ENCODE measurements at regions of chr12 and their contacts with region 1.

Region 1: DNA sequence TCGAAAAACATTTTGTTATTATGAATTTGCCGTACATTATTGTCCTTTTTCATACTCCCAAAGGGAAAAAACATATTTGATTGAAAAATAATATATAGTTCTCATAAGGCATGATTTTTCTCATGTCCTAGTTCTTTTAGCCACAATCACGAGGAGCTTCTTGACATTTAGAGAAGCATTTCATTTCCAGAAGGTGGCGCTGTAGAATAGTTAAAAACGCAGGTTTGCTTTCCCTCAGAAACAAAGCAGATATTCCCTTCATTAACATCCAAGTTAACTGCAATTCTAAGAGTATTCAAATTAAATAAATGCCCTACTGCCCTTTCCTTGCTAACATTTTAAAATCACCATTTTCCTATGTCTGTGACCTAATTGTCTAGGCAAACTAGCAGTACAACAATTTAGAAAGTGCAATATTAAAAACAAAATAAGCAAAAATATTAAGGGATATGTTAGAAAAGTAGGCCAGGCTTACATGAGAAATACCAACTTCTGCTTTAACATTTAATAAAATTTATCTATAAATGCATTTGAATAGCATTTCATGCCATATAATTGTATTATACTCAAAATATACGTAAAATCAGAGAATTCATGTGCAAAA is 10.9 kb upstream of the PIK3C2G start:
- DNase-seq: no peak
- ATAC-seq: 0 out of 2 replicates have a peak, but pooled peaks have one; percentile 44
- H3K4me3 Mint-ChIP-seq: no peak overlapping the region
- H3K27ac Mint-ChIP-seq: no peak overlapping the region
- H3K4me1 Mint-ChIP-seq: peaks cover 6% of the 10 kb centered on the region; the same call in 1 of the 2 replicates
- H3K27me3 Mint-ChIP-seq: no peaks in the 10 kb centered on the region
- CTCF ChIP-seq: peak; percentile 50

Region 2: GRCh38 chr12:18261253-18261652 is 10.8 kb after region 1 on chr12 and contains the start of gene PIK3C2G:
- CTCF ChIA-PET with region 1: interaction called, 15 read pairs
- POLR2A ChIA-PET with region 1: no interaction called
- DNase-seq: no peak
- ATAC-seq: no peak
- H3K4me3 Mint-ChIP-seq: no peak within 1 kb of the TSS
- H3K27ac Mint-ChIP-seq: peak within 1 kb of the TSS; percentile 51; the same call in 1 of the 2 replicates
- H3K4me1 Mint-ChIP-seq: peaks cover 15% of the 10 kb centered on the region
- H3K27me3 Mint-ChIP-seq: no peaks in the 10 kb centered on the region
- CTCF ChIP-seq: no peak
- total RNA-seq, gene PIK3C2G: not detected in 3 replicates

Region 3: GRCh38 chr12:18320036-18320617 is 69.7 kb after region 1 on chr12:
- CTCF ChIA-PET with region 1: interaction called, 29 read pairs
- POLR2A ChIA-PET with region 1: no interaction called
- DNase-seq: peak; percentile 28
- ATAC-seq: peak; percentile 99
- H3K4me3 Mint-ChIP-seq: no peak overlapping the region
- H3K27ac Mint-ChIP-seq: no peak overlapping the region; the same call in 1 of the 2 replicates
- H3K4me1 Mint-ChIP-seq: peaks cover 7% of the 10 kb centered on the region
- H3K27me3 Mint-ChIP-seq: no peaks in the 10 kb centered on the region
- CTCF ChIP-seq: no peak